HepG2 (cell line): ENCODE measurements at regions of chr20 and their contacts with region 1.

Region 1: GRCh38 chr20:53623454-53624211 is 30.0 kb upstream of the ZNF217 start:
- DNase-seq: peak; percentile 77
- ATAC-seq: peak; percentile 88
- H3K4me3 ChIP-seq: peak overlapping the region; percentile 54 to 66 (median 66)
- H3K27ac ChIP-seq: peak overlapping the region; percentile 93
- H3K4me1 ChIP-seq: peaks cover 38% of the 10 kb centered on the region
- H3K27me3 ChIP-seq: no peaks in the 10 kb centered on the region
- CTCF ChIP-seq: peak; percentile 46
- EP300 ChIP-seq: peak in 1 of 2 experiments; percentile 64; a peak in 1 of 4 replicates
- POLR2A ChIP-seq: peak; percentile 78 to 81
- RAD21 ChIP-seq: peak; percentile 22; the same call in 1 of the 2 replicates

Region 2: DNA sequence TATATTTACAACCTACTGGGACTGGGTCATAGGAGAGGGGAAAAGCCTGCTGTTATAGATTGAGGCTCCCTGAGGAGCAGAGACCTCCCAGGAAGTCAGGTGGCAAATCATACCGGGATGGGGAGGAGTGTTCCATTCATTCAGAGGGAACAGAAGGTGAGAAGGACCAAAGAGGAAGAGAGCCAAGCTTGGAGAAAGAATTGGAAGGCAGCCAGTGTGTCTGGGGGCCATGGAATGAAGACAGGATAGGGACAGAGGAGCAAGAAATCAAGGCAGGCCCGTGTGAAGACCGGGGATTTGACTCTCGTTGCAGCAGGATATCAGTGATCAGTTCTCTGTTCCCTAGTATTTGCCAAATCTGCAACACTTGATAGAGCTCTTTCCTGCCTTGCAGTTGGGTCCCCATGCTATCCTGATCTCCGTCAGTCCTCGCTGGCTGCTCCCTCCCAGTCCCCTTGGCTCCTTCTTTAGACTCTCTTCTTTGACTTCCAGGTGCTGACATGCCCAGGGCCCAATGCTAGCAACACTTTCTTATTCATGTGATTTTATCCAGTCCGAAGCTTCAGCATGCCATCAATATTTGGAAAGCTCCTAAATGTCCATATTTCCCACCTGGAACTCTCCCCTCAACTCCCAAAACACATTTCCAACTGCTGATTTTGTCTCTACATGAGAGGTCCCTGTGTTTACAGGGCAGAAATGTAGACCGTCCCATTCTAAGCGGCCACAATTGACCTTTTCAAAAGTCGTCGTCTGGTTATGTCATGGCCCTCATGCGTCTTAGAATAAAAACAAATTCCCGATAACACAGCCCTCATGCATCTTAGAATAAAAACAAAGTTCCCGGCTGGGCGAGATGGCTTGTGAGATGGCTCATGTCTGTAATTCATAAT is 24.0 kb before region 1 on chr20:
- CTCF ChIA-PET with region 1: no interaction called
- POLR2A ChIA-PET with region 1: interaction called, 147 read pairs
- in situ Hi-C with region 1: no loop called
- intact Hi-C with region 1: loop called (anchors 2 kb)
- DNase-seq: no peak
- ATAC-seq: no peak
- H3K4me3 ChIP-seq: no peak overlapping the region
- H3K27ac ChIP-seq: no peak overlapping the region
- H3K4me1 ChIP-seq: peaks cover 60% of the 10 kb centered on the region
- H3K27me3 ChIP-seq: no peaks in the 10 kb centered on the region; a peak in 1 of 5 replicates
- CTCF ChIP-seq: no peak
- EP300 ChIP-seq: no peak
- POLR2A ChIP-seq: no peak
- RAD21 ChIP-seq: no peak

Region 3: GRCh38 chr20:53643031-53643832 is 19.6 kb after region 1 on chr20:
- CTCF ChIA-PET with region 1: no interaction called
- POLR2A ChIA-PET with region 1: interaction called, 70 read pairs
- in situ Hi-C with region 1: no loop called
- intact Hi-C with region 1: loop called (anchors 1 kb)
- DNase-seq: no peak
- ATAC-seq: peak; percentile 77
- H3K4me3 ChIP-seq: peak overlapping the region; percentile 34 to 64 (median 48); a peak in 5 of 6 replicates
- H3K27ac ChIP-seq: peak overlapping the region; percentile 93
- H3K4me1 ChIP-seq: peaks cover 81% of the 10 kb centered on the region
- H3K27me3 ChIP-seq: no peaks in the 10 kb centered on the region
- CTCF ChIP-seq: no peak
- EP300 ChIP-seq: no peak; a peak in 1 of 4 replicates
- POLR2A ChIP-seq: peak in 1 of 2 experiments; percentile 77; a peak in 2 of 4 replicates
- RAD21 ChIP-seq: no peak

Region 4: DNA sequence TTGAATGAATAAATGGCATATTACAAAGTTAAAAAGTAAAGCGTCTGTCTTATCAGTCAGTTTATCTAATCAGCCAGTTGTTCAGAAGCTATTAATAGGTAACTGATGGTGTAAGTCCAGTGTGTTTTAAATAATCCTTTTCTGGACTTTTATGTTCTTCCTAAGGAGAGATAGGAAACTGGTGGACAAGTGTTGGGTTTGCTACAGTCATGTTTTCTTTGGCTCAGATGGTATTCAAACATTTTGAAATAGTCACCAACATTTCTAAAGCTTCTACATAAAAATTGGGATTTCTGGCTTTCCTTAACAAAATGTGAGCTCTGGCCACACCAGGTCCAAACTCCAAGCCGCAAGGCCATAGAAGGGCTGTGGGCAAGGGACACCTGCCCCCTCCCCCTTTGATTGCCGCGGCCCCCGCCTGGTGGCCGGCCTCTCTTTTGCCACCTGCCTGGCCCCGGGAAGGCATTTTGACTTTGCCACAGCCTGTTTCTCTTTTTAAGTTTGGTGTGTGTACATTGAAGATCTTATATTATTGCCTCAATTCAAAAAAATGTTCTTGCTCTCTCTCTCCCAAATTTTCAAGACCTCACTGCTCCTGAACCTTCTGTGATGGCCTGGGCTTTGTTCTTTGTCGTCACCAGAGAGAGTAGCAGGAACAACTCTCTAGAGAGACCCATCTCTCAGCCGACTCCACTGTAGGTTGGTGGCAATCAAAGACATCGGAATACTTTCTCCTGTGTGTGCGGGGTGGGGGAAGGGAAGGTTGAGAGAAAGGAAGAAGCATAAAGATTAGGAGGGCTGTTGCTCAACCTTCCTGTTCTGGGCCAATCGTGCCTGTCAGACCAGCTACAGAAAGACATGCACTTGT is 54.0 kb after region 1 on chr20:
- CTCF ChIA-PET with region 1: no interaction called
- POLR2A ChIA-PET with region 1: interaction called, 48 read pairs
- in situ Hi-C with region 1: no loop called
- intact Hi-C with region 1: loop called (anchors 1 kb)
- DNase-seq: peak; percentile 92
- ATAC-seq: peak; percentile 97
- H3K4me3 ChIP-seq: peak overlapping the region; percentile 45 to 70 (median 67)
- H3K27ac ChIP-seq: peak overlapping the region; percentile 90
- H3K4me1 ChIP-seq: peaks cover 62% of the 10 kb centered on the region
- H3K27me3 ChIP-seq: no peaks in the 10 kb centered on the region
- CTCF ChIP-seq: peak; percentile 77
- EP300 ChIP-seq: peak; percentile 7 to 80; a peak in 3 of 4 replicates
- POLR2A ChIP-seq: peak in 1 of 2 experiments; percentile 47; a peak in 2 of 4 replicates
- RAD21 ChIP-seq: peak; percentile 91

Region 5: DNA sequence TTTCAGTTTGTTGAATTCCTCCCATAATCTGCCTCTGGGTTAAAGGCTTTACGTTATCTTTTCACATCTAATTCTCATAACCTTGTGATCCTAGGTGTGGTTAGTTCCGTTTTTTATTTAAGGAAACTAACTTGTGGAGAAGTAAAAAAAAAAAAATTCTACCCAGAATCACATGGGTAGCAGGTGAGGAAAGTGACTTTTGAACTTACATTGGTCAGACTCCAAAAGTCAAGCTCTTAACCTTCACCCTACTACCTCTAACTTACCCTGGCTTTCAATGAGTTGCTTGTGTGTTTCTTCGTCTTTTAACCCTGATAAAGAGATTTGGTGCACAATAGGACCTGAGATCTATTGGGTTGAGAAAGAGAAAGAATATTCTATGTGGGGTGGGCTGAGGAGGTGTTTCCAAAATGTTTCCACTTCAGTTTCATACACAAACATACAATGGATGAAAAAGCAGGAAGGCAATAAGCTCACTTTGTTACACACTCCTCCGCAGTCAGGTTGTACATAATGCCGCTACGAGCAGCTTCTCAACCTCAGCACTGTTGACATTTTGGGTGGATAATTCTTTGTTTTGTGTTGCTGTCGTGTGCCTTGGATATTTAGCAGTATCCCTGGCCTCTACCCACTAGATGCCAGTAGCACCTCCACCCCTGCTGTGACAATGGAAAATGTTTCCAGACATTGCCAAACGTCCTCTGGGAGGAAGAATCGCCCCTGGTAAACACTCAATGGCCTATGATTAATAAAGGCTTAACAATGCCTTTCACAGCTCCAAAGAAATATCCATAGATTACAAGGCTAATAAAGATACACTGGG is 163.0 kb after region 1 on chr20:
- CTCF ChIA-PET with region 1: no interaction called
- POLR2A ChIA-PET with region 1: interaction called, 10 read pairs
- in situ Hi-C with region 1: no loop called
- intact Hi-C with region 1: no loop called
- DNase-seq: peak; percentile 56
- ATAC-seq: peak; percentile 77
- H3K4me3 ChIP-seq: peak overlapping the region; percentile 26 to 52 (median 27)
- H3K27ac ChIP-seq: peak overlapping the region; percentile 72
- H3K4me1 ChIP-seq: peaks cover 65% of the 10 kb centered on the region
- H3K27me3 ChIP-seq: no peaks in the 10 kb centered on the region
- CTCF ChIP-seq: peak; percentile 46
- EP300 ChIP-seq: peak in 1 of 2 experiments; percentile 82; a peak in 2 of 4 replicates
- POLR2A ChIP-seq: no peak
- RAD21 ChIP-seq: peak; percentile 40

Region 6: GRCh38 chr20:53915446-53916172 is 292.0 kb after region 1 on chr20:
- CTCF ChIA-PET with region 1: no interaction called
- POLR2A ChIA-PET with region 1: interaction called, 29 read pairs
- in situ Hi-C with region 1: no loop called
- intact Hi-C with region 1: no loop called
- DNase-seq: peak; percentile 84
- ATAC-seq: peak; percentile 92
- H3K4me3 ChIP-seq: peak overlapping the region; percentile 73 to 88 (median 80)
- H3K27ac ChIP-seq: peak overlapping the region; percentile 17
- H3K4me1 ChIP-seq: peaks cover 48% of the 10 kb centered on the region
- H3K27me3 ChIP-seq: peaks cover 0 to 2% of the 10 kb centered on the region in 2 experiments; a peak in 1 of 5 replicates
- CTCF ChIP-seq: peak; percentile 96
- EP300 ChIP-seq: no peak; a peak in 1 of 4 replicates
- POLR2A ChIP-seq: no peak
- RAD21 ChIP-seq: peak; percentile 83